Transverse colon (tissue), 4 donors: ENCODE measurements at regions of chr2 and their contacts with region 1.

Region 1: GRCh38 chr2:127591221-127591923 is 54.6 kb upstream of the GPR17 start:
- DNase-seq: peak; percentile 41
- H3K4me3 ChIP-seq: no peak overlapping the region
- H3K27ac ChIP-seq: no peak overlapping the region
- H3K4me1 ChIP-seq: no peaks in the 10 kb centered on the region
- H3K27me3 ChIP-seq: no peaks in the 10 kb centered on the region
- CTCF ChIP-seq: peak; percentile 47 to 78 (median 63)
- EP300 ChIP-seq: no peak
- POLR2A ChIP-seq: no peak

Region 2: DNA sequence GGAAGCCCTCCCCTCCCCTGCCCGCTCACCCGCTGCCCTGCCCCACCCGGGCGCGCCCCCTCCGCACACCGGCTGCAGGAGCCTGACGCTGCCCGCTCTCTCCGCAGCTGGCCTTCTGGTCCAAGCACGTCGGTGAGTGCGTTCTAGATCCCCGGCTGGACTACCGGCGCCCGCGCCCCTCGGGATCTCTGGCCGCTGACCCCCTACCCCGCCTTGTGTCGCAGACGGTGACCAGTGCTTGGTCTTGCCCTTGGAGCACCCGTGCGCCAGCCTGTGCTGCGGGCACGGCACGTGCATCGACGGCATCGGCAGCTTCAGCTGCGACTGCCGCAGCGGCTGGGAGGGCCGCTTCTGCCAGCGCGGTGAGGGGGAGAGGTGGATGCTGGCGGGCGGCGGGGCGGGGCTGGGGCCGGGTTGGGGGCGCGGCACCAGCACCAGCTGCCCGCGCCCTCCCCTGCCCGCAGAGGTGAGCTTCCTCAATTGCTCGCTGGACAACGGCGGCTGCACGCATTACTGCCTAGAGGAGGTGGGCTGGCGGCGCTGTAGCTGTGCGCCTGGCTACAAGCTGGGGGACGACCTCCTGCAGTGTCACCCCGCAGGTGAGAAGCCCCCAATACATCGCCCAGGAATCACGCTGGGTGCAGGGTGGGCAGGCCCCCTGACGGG is 168.4 kb before region 1 on chr2:
- in situ Hi-C with region 1: no loop called
- intact Hi-C with region 1: no loop called
- DNase-seq: peak; percentile 45
- H3K4me3 ChIP-seq: peak overlapping the region in 3 of 4 donors; percentile 20 to 49 (median 43)
- H3K27ac ChIP-seq: peak overlapping the region in 2 of 4 donors; percentile 37 to 46
- H3K4me1 ChIP-seq: peaks cover 0 to 16% (median 14%) of the 10 kb centered on the region in 4 donors
- H3K27me3 ChIP-seq: peaks cover 32% of the 10 kb centered on the region
- CTCF ChIP-seq: no peak
- EP300 ChIP-seq: no peak
- POLR2A ChIP-seq: peak; percentile 17

Region 3: DNA sequence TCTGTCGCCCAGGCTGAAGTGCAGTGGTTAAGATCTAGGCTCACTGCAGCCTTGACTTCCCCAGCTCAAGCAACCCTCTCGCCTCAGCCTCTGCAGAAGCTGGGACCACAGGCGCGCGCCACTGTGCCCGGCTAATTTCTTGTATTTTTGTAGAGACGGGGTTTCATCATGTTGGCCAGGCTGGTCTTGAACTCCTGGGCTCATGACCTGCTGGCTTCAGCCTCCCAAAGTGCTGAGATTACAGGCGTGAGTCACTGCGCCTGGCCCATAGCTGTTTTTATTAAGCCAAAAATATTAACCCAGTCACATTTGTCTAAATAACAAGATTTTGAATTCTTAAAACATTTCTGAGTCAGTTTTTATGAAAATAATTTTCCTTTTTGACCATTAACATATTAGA is 103.6 kb after region 1 on chr2:
- in situ Hi-C with region 1: no loop called
- intact Hi-C with region 1: loop called (anchors 5 kb)
- DNase-seq: no peak
- H3K4me3 ChIP-seq: no peak overlapping the region
- H3K27ac ChIP-seq: peak overlapping the region in 3 of 4 donors; percentile 10 to 74 (median 42)
- H3K4me1 ChIP-seq: peaks cover 0 to 7% (median 5%) of the 10 kb centered on the region in 4 donors
- H3K27me3 ChIP-seq: no peaks in the 10 kb centered on the region
- CTCF ChIP-seq: no peak
- EP300 ChIP-seq: no peak
- POLR2A ChIP-seq: no peak

Region 4: DNA sequence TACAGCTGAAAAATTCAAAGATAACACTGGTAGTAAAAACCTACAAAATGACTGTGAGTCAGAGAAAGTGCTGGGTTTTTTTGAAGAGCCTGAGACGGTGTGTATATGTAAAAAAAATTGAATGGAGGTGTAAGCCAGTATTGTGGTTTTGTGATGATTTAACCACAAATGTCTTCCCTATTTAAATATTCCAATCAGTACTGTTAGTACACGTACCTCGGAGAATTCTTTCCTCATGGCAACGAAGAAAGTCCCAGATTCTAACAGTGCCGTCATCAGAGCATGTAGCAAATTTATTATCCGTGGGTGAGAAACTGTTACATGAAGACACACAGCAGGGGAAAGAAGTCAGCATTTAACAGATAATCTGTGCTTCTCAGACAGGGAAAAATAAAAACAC is 171.5 kb after region 1 on chr2:
- in situ Hi-C with region 1: no loop called
- intact Hi-C with region 1: no loop called
- DNase-seq: no peak
- H3K4me3 ChIP-seq: no peak overlapping the region
- H3K27ac ChIP-seq: no peak overlapping the region
- H3K4me1 ChIP-seq: no peaks in the 10 kb centered on the region
- H3K27me3 ChIP-seq: no peaks in the 10 kb centered on the region
- CTCF ChIP-seq: no peak
- EP300 ChIP-seq: no peak
- POLR2A ChIP-seq: no peak

Region 5: DNA sequence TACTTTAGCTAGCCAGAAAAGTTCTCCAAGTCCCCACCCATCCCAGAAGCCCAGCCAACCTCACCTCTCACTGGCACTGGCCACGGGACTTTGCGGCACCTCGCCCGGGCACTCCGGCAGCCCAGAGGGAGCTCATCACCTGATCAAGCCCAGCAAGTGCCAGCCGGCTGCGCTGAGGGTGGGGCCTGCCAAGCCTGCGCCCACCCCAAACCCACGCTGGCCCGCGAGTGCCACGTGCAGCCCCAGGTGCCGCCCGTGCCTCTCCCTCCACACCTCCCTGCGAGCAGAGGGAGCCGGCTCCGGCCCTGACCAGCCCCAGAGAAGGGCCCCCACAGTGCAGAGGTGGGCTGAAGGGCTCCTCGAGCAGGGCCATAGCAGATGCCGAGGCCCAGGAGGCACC is 1312.3 kb after region 1 on chr2:
- in situ Hi-C with region 1: no loop called
- intact Hi-C with region 1: no loop called
- DNase-seq: no peak
- H3K4me3 ChIP-seq: no peak overlapping the region
- H3K27ac ChIP-seq: no peak overlapping the region
- H3K4me1 ChIP-seq: no peaks in the 10 kb centered on the region
- H3K27me3 ChIP-seq: no peaks in the 10 kb centered on the region
- CTCF ChIP-seq: no peak
- EP300 ChIP-seq: no peak
- POLR2A ChIP-seq: no peak